H1 (cell line): ENCODE measurements at regions of chr20 and their contacts with region 1.

Region 1: GRCh38 chr20:49484180-49485140 is 2.0 kb upstream of the KCNB1 start:
- DNase-seq: peak; percentile 57 to 92
- H3K4me3 ChIP-seq: peak overlapping the region; percentile 41 to 72 (median 60)
- H3K27ac ChIP-seq: no peak overlapping the region
- H3K4me1 ChIP-seq: peaks cover 0 to 5% (median under 1%) of the 10 kb centered on the region in 4 experiments; a peak in 2 of 7 replicates
- H3K27me3 ChIP-seq: peaks cover 0 to 12% (median 9%) of the 10 kb centered on the region in 4 experiments; a peak in 5 of 7 replicates
- CTCF ChIP-seq: peak; percentile 67 to 97 (median 83)
- EP300 ChIP-seq: peak in 1 of 2 experiments; percentile 39; a peak in 1 of 3 replicates
- POLR2A ChIP-seq: no peak
- RAD21 ChIP-seq: peak; percentile 83 to 89

Region 2: GRCh38 chr20:49323622-49324238 is 160.7 kb before region 1 on chr20:
- CTCF ChIA-PET with region 1: interaction called, 18 read pairs
- POLR2A ChIA-PET with region 1: interaction called, 3 read pairs
- DNase-seq: no peak
- H3K4me3 ChIP-seq: no peak overlapping the region
- H3K27ac ChIP-seq: no peak overlapping the region
- H3K4me1 ChIP-seq: peaks cover 0 to 12% (median 2%) of the 10 kb centered on the region in 4 experiments; a peak in 5 of 7 replicates
- H3K27me3 ChIP-seq: peaks cover 2 to 12% (median 11%) of the 10 kb centered on the region in 4 experiments
- CTCF ChIP-seq: peak in 2 of 3 experiments; percentile 35 to 37; a peak in 3 of 4 replicates
- EP300 ChIP-seq: no peak
- POLR2A ChIP-seq: no peak
- RAD21 ChIP-seq: peak; percentile 46 to 58

Region 3: GRCh38 chr20:49405111-49405551 is 79.3 kb before region 1 on chr20:
- CTCF ChIA-PET with region 1: interaction called, 27 read pairs
- POLR2A ChIA-PET with region 1: no interaction called
- DNase-seq: no peak
- H3K4me3 ChIP-seq: no peak overlapping the region
- H3K27ac ChIP-seq: no peak overlapping the region
- H3K4me1 ChIP-seq: peaks cover 0 to 6% (median 0%) of the 10 kb centered on the region in 4 experiments; a peak in 2 of 7 replicates
- H3K27me3 ChIP-seq: no peaks in the 10 kb centered on the region; a peak in 1 of 7 replicates
- CTCF ChIP-seq: no peak
- EP300 ChIP-seq: no peak
- POLR2A ChIP-seq: no peak
- RAD21 ChIP-seq: no peak

Region 4: GRCh38 chr20:49435659-49436058 is 48.8 kb before region 1 on chr20:
- CTCF ChIA-PET with region 1: interaction called, 10 read pairs
- POLR2A ChIA-PET with region 1: interaction called, 4 read pairs
- DNase-seq: no peak
- H3K4me3 ChIP-seq: no peak overlapping the region
- H3K27ac ChIP-seq: no peak overlapping the region
- H3K4me1 ChIP-seq: no peaks in the 10 kb centered on the region
- H3K27me3 ChIP-seq: no peaks in the 10 kb centered on the region
- CTCF ChIP-seq: peak; percentile 41 to 56 (median 53)
- EP300 ChIP-seq: no peak
- POLR2A ChIP-seq: no peak
- RAD21 ChIP-seq: peak; percentile 59 to 75; a peak in 3 of 4 replicates

Region 5: DNA sequence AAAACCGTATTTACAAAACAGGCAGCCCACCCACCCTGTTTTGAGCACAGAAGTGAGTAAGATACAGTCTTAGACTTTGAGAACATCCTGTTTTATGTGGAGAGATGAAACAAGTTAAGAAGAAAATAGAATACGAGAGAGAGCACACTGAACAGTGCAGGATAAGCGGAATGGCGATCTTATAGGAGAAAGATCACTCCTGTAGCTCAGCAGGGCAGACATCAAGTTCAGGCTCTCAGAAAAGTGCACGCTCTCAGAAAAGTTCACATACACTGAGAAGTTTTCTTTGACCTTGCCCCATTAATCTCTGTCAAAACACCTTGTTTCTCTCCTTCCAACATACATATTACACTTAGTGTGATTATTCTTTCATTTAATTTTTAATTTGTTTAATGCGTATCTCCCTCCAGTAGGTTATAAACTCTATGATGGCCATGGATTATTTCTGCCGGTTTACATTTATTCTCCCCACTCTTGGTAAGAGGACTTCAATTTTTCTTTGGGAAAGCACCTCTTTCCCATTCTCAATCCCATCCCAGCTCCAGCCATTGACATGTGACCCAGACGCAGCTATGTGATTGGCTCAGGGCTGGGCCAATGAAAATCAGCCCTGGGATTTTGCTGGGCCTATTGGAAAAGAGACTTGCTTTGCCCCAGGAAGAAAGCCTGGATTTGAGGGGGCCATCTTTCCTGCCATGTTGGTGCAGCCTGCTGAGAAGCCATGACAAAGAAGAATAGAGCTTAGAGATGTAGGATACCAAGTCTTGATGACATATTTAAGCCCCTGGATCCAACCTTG is 18.1 kb before region 1 on chr20:
- CTCF ChIA-PET with region 1: interaction called, 18 read pairs
- POLR2A ChIA-PET with region 1: no interaction called
- DNase-seq: no peak
- H3K4me3 ChIP-seq: no peak overlapping the region
- H3K27ac ChIP-seq: no peak overlapping the region
- H3K4me1 ChIP-seq: peaks cover 0 to 2% (median 0%) of the 10 kb centered on the region in 4 experiments; a peak in 1 of 7 replicates
- H3K27me3 ChIP-seq: no peaks in the 10 kb centered on the region
- CTCF ChIP-seq: no peak
- EP300 ChIP-seq: no peak
- POLR2A ChIP-seq: 0 out of 3 replicates have a peak, but pooled peaks of 1 of the 2 experiments have one; percentile 25
- RAD21 ChIP-seq: no peak

Region 6: GRCh38 chr20:49508435-49509199 is 24.2 kb after region 1 on chr20:
- CTCF ChIA-PET with region 1: interaction called, 88 read pairs
- POLR2A ChIA-PET with region 1: interaction called, 3 read pairs
- DNase-seq: no peak
- H3K4me3 ChIP-seq: no peak overlapping the region
- H3K27ac ChIP-seq: no peak overlapping the region
- H3K4me1 ChIP-seq: no peaks in the 10 kb centered on the region
- H3K27me3 ChIP-seq: no peaks in the 10 kb centered on the region
- CTCF ChIP-seq: peak in 2 of 3 experiments; percentile 63 to 67; a peak in 3 of 4 replicates
- EP300 ChIP-seq: no peak
- POLR2A ChIP-seq: no peak
- RAD21 ChIP-seq: peak; percentile 62 to 73

Region 7: DNA sequence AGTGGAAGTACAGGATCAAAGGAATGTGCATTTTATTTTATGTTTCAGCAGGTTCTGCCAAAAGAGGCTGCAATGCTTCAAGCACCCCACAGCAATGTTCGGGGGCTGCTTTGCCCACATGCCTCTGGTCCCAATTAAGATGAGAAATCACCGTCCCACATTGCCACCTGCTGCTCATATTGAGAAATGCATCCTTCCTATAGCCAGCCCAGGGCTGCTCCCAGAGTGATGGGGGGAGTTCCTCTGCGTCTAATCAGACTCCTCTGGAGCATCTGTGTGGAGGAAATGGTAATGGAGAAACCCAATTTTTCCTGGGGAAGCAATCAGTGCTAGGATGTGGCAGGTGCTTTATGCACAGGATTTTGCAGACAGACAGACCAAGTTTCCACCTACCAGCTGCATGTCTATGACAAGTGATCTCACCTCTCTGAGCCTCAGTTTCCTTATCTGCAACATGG is 49.8 kb after region 1 on chr20:
- CTCF ChIA-PET with region 1: interaction called, 10 read pairs
- POLR2A ChIA-PET with region 1: no interaction called
- DNase-seq: peak in 1 of 2 experiments; percentile 85
- H3K4me3 ChIP-seq: no peak overlapping the region
- H3K27ac ChIP-seq: no peak overlapping the region
- H3K4me1 ChIP-seq: no peaks in the 10 kb centered on the region
- H3K27me3 ChIP-seq: no peaks in the 10 kb centered on the region
- CTCF ChIP-seq: peak; percentile 48 to 85 (median 81)
- EP300 ChIP-seq: no peak
- POLR2A ChIP-seq: no peak
- RAD21 ChIP-seq: peak; percentile 73 to 80